ENCODE measurements at regions of chr22 and their contacts with region 1.

Region 1: DNA sequence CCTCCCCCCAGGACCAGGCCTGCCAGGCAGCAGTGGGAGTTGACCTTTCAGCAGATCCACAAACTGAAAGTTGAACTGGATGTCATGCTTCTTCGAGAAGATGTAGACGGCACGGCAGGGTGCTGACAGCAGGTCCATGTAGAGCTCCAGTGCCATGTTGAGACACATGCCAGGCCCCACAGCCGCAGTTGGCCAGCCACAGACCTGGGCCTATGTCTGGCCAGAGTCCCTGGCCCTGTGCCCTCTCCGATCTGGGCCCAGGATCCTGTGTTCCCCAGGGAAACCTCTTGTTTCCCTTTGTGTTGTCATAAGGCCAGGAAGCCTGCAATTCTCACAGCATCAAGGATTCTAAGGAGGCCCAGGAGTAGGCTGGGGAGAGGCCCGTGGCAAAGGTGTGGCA is at the start of gene GSTT4:
- DNase-seq: peak in 1 of 10 donors; percentile 20
- H3K4me3 ChIP-seq: no peak within 1 kb of the TSS
- H3K27ac ChIP-seq: peak within 1 kb of the TSS in 5 of 59 donors; percentile 7 to 31 (median 30)
- H3K27me3 ChIP-seq: no peaks in the 10 kb centered on the region
- CTCF ChIP-seq: no peak
- total RNA-seq, gene GSTT4: 0.73 TPM in 1 of 120 experiments, not detected in the others

Region 2: GRCh38 chr22:24175160-24175808 is 170.1 kb after region 1 on chr22:
- intact Hi-C with region 1: loop called in 1 of 2 experiments (anchors 10 kb)
- DNase-seq: peak; percentile 55 to 83 (median 73)
- H3K4me3 ChIP-seq: no peak overlapping the region
- H3K27ac ChIP-seq: peak overlapping the region in 51 of 59 donors; percentile 2 to 86 (median 64)
- H3K27me3 ChIP-seq: no peaks in the 10 kb centered on the region
- CTCF ChIP-seq: peak; percentile 30 to 89 (median 77)

Measured in dorsolateral prefrontal cortex (tissue), 120 donors.